ENCODE measurements at regions of chr2 and their contacts with region 1.

Region 1: DNA sequence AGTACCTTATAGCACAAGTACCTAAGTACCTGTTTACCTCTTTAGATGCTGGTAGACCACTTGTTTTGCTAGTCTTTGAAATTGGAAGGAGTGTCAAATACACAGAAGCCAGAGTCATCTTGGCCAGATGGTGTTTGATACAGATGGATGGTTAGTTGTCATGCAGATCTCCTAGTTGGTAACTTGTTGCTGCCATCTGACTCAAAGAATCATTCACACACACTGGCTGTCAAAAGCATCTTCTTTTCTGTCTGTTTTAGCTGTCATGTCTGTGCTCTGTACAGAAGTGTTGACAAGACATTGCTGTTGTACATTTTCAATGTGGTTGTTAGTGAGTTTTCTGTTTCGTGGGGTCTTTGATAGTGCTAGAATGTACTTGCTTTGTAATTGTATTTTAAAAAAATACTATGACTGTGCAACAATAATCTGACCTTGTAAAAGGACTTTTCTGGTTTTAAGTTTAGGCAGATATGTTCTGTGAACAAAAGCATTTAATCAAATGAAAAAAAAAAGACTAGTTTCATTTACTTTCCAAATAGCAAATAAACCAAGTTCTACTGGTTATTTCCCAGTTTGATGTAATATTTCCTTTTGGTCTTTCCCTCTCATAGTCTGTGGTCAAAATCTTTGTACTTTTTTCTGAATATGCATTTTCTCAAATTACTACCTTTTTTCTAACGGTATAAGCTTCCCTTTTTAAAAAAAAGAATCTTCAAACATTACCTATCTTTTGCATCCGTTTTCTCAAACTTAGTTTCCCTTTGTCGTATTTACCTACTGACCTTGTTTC is 39.9 kb downstream of the TANK start:
- DNase-seq: no peak
- H3K4me3 Mint-ChIP-seq: peak overlapping the region; percentile 54
- H3K27ac Mint-ChIP-seq: peak overlapping the region; percentile 90
- H3K4me1 Mint-ChIP-seq: peaks cover 51% of the 10 kb centered on the region
- H3K27me3 Mint-ChIP-seq: no peaks in the 10 kb centered on the region

Region 2: DNA sequence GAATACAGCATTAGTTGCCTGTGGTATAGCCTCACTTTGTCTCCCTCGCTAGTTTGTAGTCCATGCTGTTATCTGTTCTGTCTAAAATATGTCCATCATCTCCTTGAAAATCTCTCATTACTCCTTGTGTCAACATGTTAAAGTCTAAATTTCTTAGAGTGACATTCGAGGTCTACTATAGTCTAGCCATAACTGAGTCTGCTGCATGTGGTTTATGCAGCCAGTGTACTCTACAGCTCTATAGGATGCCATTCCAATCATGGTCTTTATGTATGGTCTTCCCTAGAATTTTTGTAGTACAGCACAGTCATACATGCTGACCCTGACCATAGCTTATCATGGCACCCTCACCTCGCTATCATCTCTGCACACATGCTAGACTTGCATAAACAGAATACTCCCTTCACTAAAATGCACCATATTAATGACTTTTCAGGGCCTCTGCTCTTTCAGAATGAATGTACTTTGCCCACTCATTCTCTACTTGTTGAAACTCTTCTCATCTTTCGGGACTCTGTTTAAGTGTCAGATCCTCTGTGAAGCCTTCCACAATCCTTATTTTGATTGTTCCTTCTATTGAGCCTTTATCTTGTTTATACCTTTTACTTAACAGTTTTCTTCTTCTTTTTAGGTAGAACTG is 27.1 kb before region 1 on chr2:
- intact Hi-C with region 1: loop called (anchors 1 kb)
- DNase-seq: no peak
- H3K4me3 Mint-ChIP-seq: peak overlapping the region; percentile 38
- H3K27ac Mint-ChIP-seq: peak overlapping the region; percentile 81
- H3K4me1 Mint-ChIP-seq: peaks cover 90% of the 10 kb centered on the region
- H3K27me3 Mint-ChIP-seq: no peaks in the 10 kb centered on the region

Region 3: DNA sequence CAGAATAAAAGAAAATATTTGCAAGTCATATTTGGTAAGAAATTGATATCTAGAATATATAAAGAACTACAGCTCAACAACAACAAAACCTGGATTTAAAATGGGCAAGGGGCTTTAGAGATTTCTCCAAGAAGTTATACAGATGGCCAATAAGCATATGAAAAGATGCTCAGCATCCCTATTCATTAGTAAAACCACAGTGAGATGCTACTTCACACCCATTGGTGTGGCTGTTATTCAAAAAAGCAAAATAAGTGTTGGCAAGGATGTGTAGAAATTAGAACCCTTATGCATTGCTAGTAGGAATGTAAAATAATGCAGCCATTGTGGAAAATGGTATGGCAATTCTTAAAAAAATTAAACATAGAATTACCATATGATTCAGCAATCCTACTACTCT is 10.1 kb before region 1 on chr2:
- intact Hi-C with region 1: loop called (anchors 2 kb)
- DNase-seq: no peak
- H3K4me3 Mint-ChIP-seq: no peak overlapping the region
- H3K27ac Mint-ChIP-seq: no peak overlapping the region
- H3K4me1 Mint-ChIP-seq: peaks cover 76% of the 10 kb centered on the region
- H3K27me3 Mint-ChIP-seq: no peaks in the 10 kb centered on the region

Region 4: DNA sequence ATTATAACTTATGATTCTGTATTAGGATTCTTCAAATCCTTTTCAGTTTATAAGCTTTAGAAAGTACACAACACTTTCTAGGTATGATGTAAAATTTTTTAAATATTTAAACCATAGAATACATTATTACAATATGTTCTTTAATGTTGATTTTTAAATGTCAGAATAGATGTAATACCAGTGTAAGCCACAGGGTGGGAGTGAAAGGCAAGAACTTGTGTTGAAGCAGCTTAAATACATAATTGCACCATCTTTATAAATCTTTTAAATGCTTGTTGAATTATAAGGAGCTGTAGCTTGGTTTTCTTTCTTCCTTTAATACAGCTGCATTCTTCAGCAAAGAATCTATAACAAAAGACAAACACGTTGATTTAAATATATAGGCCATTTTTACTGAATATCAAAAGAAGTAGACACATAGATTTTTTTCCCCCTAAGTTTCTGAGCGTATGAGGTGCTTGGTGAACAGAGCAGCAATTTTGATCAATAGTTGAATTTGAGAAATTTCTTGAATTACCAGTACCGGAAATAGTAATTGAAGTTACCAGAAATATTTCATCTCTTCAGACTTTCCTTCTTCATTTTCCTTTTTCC is 23.1 kb after region 1 on chr2:
- intact Hi-C with region 1: loop called (anchors 2 kb)
- DNase-seq: no peak
- H3K4me3 Mint-ChIP-seq: no peak overlapping the region
- H3K27ac Mint-ChIP-seq: no peak overlapping the region
- H3K4me1 Mint-ChIP-seq: peaks cover 20% of the 10 kb centered on the region
- H3K27me3 Mint-ChIP-seq: no peaks in the 10 kb centered on the region

Measured in activated T-helper 1 cell treated with anti-CD3 and anti-CD28 coated beads, Interleukin-12 subunit alpha, Interleukin-12 subunit beta, Interleukin-2, Interleukin-4 antibody, amounts not matched to agents 30 ng/mL and 10 ng/mL and 1 ng/mL, durations not matched to agents 14 hours and 24 hours and 36 hours (primary cell).